ENCODE measurements at regions of chr6 and their contacts with region 1.

Region 1: GRCh38 chr6:26596579-26597388 is at the start of gene ABT1:
- DNase-seq: peak; percentile 97
- ATAC-seq: peak; percentile 74
- H3K4me3 ChIP-seq: peak within 1 kb of the TSS; percentile 94 to 98
- H3K27ac ChIP-seq: peak within 1 kb of the TSS; percentile 80
- H3K4me1 ChIP-seq: peaks cover 19 to 43% of the 10 kb centered on the region in 2 experiments
- H3K27me3 ChIP-seq: no peaks in the 10 kb centered on the region
- CTCF ChIP-seq: no peak
- POLR2A ChIP-seq: peak; percentile 80
- RAD21 ChIP-seq: no peak; the same call in 1 of the 2 replicates
- total RNA-seq, gene ABT1: 26.7 TPM

Region 2: GRCh38 chr6:26175428-26176181 is 421.2 kb before region 1 on chr6:
- CTCF ChIA-PET with region 1: interaction called, 16 read pairs
- POLR2A ChIA-PET with region 1: interaction called, 3 read pairs
- RAD21 ChIA-PET with region 1: no interaction called
- intact Hi-C with region 1: loop called (anchors 2 kb)
- DNase-seq: no peak
- ATAC-seq: no peak
- H3K4me3 ChIP-seq: no peak overlapping the region
- H3K27ac ChIP-seq: peak overlapping the region; percentile 46; the same call in 1 of the 2 replicates
- H3K4me1 ChIP-seq: peaks cover 11 to 28% of the 10 kb centered on the region in 2 experiments
- H3K27me3 ChIP-seq: no peaks in the 10 kb centered on the region
- CTCF ChIP-seq: peak; percentile 62 to 75 (median 73)
- POLR2A ChIP-seq: no peak
- RAD21 ChIP-seq: peak; percentile 83

Region 3: GRCh38 chr6:26532699-26533531 is 63.9 kb before region 1 on chr6:
- CTCF ChIA-PET with region 1: interaction called, 11 read pairs
- POLR2A ChIA-PET with region 1: no interaction called
- RAD21 ChIA-PET with region 1: interaction called in 1 of 2 experiments, 3 read pairs
- intact Hi-C with region 1: no loop called
- DNase-seq: peak; percentile 83
- ATAC-seq: peak; percentile 57
- H3K4me3 ChIP-seq: peak overlapping the region; percentile 46 to 60
- H3K27ac ChIP-seq: peak overlapping the region; percentile 47
- H3K4me1 ChIP-seq: peaks cover 8 to 26% of the 10 kb centered on the region in 2 experiments; a peak in 3 of 4 replicates
- H3K27me3 ChIP-seq: no peaks in the 10 kb centered on the region
- CTCF ChIP-seq: no peak
- POLR2A ChIP-seq: no peak
- RAD21 ChIP-seq: 0 out of 2 replicates have a peak, but pooled peaks have one; percentile 21

Region 4: GRCh38 chr6:26576929-26577719 is 19.7 kb before region 1 on chr6:
- CTCF ChIA-PET with region 1: interaction called, 45 read pairs
- POLR2A ChIA-PET with region 1: interaction called, 10 read pairs
- RAD21 ChIA-PET with region 1: interaction called, 4 to 6 read pairs
- intact Hi-C with region 1: loop called (anchors 1 kb)
- DNase-seq: peak; percentile 84
- ATAC-seq: peak; percentile 63
- H3K4me3 ChIP-seq: peak overlapping the region; percentile 15 to 33; a peak in 3 of 4 replicates
- H3K27ac ChIP-seq: no peak overlapping the region
- H3K4me1 ChIP-seq: peaks cover 3 to 40% of the 10 kb centered on the region in 2 experiments; a peak in 3 of 4 replicates
- H3K27me3 ChIP-seq: no peaks in the 10 kb centered on the region
- CTCF ChIP-seq: no peak
- POLR2A ChIP-seq: no peak
- RAD21 ChIP-seq: no peak

Region 5: DNA sequence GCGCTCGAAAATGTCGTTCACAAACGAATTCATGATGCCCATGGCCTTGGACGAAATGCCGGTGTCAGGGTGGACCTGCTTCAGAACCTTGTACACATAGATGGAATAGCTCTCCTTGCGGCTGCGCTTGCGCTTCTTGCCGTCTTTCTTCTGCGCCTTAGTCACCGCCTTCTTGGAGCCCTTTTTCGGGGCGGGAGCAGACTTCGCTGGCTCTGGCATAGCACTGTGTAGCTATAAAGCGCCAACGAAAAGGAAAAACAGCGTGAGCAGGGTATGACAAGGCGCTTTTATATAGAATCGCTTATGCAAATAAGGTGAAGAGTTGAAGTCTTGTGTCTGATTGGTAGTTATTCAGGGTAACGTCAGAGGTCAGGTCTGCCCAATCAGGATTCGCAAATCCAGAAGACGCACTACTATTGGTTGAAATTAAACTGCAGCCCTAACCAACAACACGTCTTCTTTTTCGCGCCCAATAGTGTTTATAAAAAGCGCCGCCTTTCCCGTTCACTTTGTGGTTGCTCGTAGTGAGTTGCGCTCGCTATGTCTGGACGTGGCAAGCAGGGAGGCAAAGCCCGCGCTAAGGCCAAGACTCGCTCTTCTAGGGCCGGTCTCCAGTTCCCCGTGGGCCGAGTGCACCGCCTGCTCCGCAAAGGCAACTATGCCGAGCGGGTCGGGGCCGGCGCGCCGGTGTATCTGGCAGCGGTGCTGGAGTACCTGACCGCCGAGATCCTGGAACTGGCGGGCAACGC is 535.9 kb after region 1 on chr6:
- CTCF ChIA-PET with region 1: no interaction called
- POLR2A ChIA-PET with region 1: interaction called, 8 read pairs
- RAD21 ChIA-PET with region 1: no interaction called
- intact Hi-C with region 1: loop called (anchors 5 kb)
- DNase-seq: peak; percentile 100
- ATAC-seq: peak; percentile 75
- H3K4me3 ChIP-seq: peak overlapping the region; percentile 62 to 71
- H3K27ac ChIP-seq: peak overlapping the region; percentile 99
- H3K4me1 ChIP-seq: peaks cover 21 to 38% of the 10 kb centered on the region in 2 experiments
- H3K27me3 ChIP-seq: no peaks in the 10 kb centered on the region
- CTCF ChIP-seq: no peak
- POLR2A ChIP-seq: peak; percentile 98
- RAD21 ChIP-seq: no peak